Left colon (tissue), 2 donors: ENCODE measurements at regions of chrX and their contacts with region 1.

Region 1: DNA sequence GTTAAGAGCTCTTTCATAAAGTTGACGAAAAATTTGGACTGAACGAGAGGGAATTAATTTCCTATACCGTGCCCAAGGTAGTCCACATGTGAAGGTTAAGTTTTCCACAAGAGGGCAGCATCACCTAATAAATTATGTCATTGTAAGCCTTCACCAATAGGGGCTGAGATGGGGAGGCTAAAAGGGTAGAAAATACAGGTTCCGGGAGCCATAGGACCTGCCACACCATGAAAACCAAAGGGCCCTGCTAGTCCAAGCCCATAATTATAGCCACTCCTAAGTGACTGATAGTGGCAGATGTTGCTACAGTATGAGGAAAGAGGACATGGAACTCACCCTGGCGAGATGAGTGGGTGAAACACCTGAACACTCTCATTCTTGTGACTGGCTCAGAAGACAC is 122.2 kb downstream of the SHROOM4 start:
- DNase-seq: no peak
- ATAC-seq: peak; percentile 76

Region 2: GRCh38 chrX:50905334-50905733 is 213.5 kb after region 1 on chrX:
- intact Hi-C with region 1: loop called in 1 of 2 experiments (anchors 10 kb)
- DNase-seq: peak in 1 of 2 donors; percentile 16
- ATAC-seq: no peak

Region 3: DNA sequence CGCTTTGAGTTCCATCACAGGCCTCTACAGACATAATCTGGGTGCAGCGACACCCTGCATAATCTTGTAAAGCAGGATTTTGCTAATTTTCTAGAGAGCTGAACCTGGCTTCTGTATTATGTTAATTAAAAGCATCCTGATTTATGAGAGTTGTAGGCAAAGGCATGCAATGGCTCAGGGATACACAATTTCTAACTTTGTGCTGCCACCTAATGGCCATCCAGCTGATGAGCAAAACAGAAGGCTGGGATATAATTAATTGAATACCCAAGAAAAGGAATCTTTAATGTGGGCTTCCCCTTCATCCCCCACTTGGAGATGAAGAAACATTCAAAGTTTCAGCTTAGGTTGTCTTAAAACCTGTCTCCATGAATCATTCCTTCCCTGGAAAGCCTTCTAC is 296.8 kb after region 1 on chrX:
- intact Hi-C with region 1: loop called in 1 of 2 experiments (anchors 5 kb)
- DNase-seq: peak in 1 of 2 donors; percentile 21
- ATAC-seq: no peak